B cell (primary cell): ENCODE measurements at regions of chr11 and their contacts with region 1.

Region 1: DNA sequence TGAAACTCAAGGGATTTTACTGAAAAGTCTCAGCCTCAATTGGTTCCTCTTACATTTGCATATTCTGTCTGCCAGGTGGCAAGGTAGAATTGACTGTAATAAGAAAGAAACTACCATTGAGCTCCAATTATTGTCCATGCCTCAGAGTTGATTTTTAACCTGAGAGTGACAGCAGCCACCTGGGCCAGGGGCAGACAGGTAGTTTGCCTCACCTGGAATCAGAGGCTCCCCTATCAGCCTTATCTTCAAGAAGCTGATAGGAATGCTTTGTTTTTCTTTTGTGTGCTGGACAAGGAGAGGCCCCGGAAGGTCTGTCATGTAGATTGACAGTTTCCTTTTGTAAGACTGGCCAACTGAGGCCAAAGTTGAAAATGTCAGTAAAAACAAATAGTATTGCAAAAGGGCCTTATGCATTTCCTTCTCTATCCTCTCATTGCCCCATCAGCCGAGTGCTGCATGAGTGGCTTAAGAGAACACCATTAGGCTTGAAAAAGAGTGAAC is 34.1 kb downstream of the CD44 start:
- DNase-seq: peak; percentile 70
- ATAC-seq: peak; percentile 56
- H3K4me3 ChIP-seq: peak overlapping the region in 3 of 5 experiments; percentile 9 to 34 (median 32)
- H3K4me3 Mint-ChIP-seq: peak overlapping the region; percentile 83
- H3K27ac ChIP-seq: peak overlapping the region; percentile 54 to 83
- H3K27ac Mint-ChIP-seq: peak overlapping the region; percentile 94
- H3K4me1 ChIP-seq: peaks cover 77 to 80% of the 10 kb centered on the region in 2 donors
- H3K4me1 Mint-ChIP-seq: peaks cover 83% of the 10 kb centered on the region
- H3K27me3 ChIP-seq: no peaks in the 10 kb centered on the region
- H3K27me3 Mint-ChIP-seq: no peaks in the 10 kb centered on the region
- CTCF ChIP-seq: no peak

Region 2: DNA sequence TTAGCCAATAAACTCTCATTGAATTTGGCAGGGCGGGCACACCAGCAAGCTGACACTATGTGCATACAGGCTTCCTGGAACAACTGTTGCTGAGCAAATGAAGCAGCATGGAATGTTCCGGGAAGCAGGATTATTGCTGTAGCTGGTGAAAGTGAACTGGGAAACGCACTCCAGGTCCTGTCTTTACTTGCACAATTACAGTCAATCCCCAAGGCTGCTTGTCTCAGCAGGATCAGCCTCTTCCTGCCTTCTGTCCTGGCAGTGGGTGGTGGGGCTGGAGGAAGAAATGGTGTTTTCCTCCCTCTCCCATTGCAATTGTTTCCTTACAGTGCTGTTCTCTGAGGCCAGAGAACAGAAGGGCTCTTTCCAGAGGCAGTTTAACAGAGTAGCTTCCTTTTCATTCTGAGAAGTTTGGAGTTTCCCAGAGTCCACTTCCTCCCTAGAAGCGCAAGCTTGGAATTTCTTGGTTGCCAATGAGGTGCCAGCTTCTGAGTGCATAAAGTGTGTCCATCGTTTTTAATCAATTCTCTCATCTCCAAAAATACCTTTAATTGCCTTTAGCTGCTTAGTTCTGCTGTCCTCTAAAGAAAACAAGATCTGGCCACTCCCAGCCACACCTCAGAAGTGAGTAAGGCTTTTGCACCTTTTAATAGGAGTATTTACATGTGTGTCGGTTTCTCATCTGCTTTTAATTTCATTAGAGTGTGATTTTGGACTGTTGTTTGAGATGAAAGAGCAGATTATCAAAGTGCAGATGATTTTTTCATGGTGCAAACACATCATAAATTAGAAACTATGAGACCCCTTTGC is 14.2 kb before region 1 on chr11:
- CTCF ChIA-PET with region 1: interaction called, 27 read pairs
- POLR2A ChIA-PET with region 1: no interaction called
- intact Hi-C with region 1: no loop called
- DNase-seq: no peak
- ATAC-seq: no peak
- H3K4me3 ChIP-seq: no peak overlapping the region
- H3K4me3 Mint-ChIP-seq: no peak overlapping the region
- H3K27ac ChIP-seq: peak overlapping the region; percentile 2 to 98
- H3K27ac Mint-ChIP-seq: peak overlapping the region; percentile 32
- H3K4me1 ChIP-seq: peaks cover 86 to 93% of the 10 kb centered on the region in 2 donors
- H3K4me1 Mint-ChIP-seq: peaks cover 95% of the 10 kb centered on the region
- H3K27me3 ChIP-seq: no peaks in the 10 kb centered on the region
- H3K27me3 Mint-ChIP-seq: no peaks in the 10 kb centered on the region
- CTCF ChIP-seq: no peak

Region 3: DNA sequence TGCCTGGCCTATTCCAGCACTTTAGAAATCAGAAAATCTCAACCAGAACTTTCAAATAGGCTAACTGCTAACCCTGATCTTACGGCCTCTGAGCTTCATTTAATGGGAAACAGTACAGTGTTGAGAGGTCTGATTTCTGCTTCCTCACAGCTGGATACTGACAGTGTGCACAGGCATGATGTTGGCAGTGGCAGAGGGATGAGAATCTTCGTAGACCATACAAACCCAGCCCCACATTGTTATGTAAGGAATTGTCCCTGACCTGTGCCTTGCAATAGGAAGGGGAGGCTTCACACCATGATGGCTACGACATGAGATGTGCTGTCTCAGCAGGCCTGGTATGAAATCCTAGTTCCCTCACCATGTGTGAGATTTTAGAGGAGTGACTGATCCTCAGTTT is 14.9 kb after region 1 on chr11:
- CTCF ChIA-PET with region 1: interaction called, 9 read pairs
- POLR2A ChIA-PET with region 1: interaction called, 7 read pairs
- intact Hi-C with region 1: loop called (anchors 2 kb)
- DNase-seq: no peak
- ATAC-seq: no peak
- H3K4me3 ChIP-seq: no peak overlapping the region
- H3K4me3 Mint-ChIP-seq: no peak overlapping the region
- H3K27ac ChIP-seq: no peak overlapping the region
- H3K27ac Mint-ChIP-seq: peak overlapping the region; percentile 54
- H3K4me1 ChIP-seq: peaks cover 10% of the 10 kb centered on the region in 2 donors
- H3K4me1 Mint-ChIP-seq: peaks cover 45% of the 10 kb centered on the region
- H3K27me3 ChIP-seq: no peaks in the 10 kb centered on the region
- H3K27me3 Mint-ChIP-seq: no peaks in the 10 kb centered on the region
- CTCF ChIP-seq: no peak